ENCODE measurements at regions of chr7 and their contacts with region 1.

Region 1: DNA sequence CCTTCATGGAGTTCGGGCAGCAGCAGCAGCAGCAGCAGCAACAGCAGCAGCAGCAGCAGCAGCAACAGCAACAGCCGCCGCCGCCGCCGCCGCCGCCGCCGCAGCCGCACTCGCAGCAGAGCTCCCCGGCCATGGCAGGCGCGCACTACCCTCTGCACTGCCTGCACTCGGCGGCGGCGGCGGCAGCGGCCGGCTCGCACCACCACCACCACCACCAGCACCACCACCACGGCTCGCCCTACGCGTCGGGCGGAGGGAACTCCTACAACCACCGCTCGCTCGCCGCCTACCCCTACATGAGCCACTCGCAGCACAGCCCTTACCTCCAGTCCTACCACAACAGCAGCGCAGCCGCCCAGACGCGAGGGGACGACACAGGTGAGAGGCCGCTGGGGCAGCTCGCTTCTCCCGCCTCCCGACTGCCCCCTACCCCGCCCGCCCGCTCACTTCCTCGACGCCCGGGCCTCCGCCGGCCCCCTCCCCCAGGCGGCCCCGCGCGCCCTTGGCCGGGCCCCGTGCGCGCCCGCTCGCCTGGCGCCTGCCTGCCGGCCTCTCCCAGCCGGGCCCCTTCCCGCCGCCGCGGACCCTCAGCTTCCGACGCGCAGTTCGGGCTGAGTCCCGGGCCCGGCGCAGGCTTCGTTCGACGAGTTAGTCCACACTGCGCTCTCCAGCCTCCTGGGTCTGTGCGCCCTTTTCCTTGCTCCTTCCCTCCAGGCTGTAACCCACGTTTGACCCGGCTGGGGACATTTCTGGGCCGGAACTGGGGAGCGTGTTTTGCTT is 873 bp downstream of the DLX6 start:
- DNase-seq: peak in 1 of 2 experiments; percentile 85
- H3K4me3 ChIP-seq: peak overlapping the region; percentile 26 to 58 (median 50)
- H3K27ac ChIP-seq: no peak overlapping the region
- H3K4me1 ChIP-seq: peaks cover 9 to 27% (median 18%) of the 10 kb centered on the region in 4 experiments
- H3K27me3 ChIP-seq: peaks cover 73 to 95% (median 88%) of the 10 kb centered on the region in 4 experiments
- CTCF ChIP-seq: 0 out of 4 replicates have a peak, but pooled peaks of 1 of the 3 experiments have one; percentile 4
- EP300 ChIP-seq: 0 out of 3 replicates have a peak, but pooled peaks of 1 of the 2 experiments have one; percentile 38
- POLR2A ChIP-seq: no peak
- RAD21 ChIP-seq: no peak

Region 2: DNA sequence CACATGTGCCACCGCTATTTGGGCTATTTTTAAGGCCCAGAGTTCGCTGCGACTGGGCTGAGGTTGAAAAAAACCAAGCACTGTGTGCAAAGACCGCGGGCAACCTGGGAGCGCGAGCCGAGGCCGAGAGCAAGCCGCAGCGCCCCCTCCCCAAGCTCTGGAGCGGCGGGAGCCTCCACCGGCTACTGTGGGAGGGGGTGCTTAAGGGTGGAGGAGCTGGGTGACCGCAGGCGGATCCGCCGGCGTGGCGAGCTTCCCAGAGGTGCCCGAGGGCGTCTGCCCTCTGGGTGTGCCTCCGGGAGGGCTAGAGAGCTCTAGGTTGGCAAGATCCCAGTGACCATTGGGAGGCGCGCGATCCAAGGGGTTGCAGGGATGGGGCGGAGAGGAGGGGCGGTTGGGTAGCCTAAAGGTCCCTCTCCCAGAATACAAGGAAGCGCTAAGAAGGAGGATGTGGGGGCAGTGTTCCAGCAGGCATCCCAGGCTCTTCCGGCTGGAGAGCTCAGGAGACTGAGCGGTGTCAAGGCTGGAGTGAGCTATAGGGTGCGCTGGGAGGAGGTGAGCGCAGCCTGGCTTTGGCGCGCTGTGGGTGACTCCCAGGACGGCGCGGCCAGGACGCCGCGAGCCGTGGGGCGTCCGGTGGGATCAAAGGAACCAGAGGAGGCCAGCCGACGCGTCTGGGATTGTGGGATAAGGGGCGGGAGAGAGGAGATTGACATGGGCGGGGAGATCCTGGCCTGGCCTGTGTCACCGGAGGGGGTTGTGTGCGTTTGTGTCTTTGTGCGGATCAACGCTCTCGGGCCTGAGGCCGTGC is 10.4 kb after region 1 on chr7:
- CTCF ChIA-PET with region 1: interaction called, 150 read pairs
- POLR2A ChIA-PET with region 1: interaction called, 22 read pairs
- DNase-seq: peak in 1 of 2 experiments; percentile 84
- H3K4me3 ChIP-seq: peak overlapping the region; percentile 22 to 52 (median 33); a peak in 6 of 8 replicates
- H3K27ac ChIP-seq: no peak overlapping the region
- H3K4me1 ChIP-seq: peaks cover 0 to 20% (median 13%) of the 10 kb centered on the region in 4 experiments; a peak in 5 of 7 replicates
- H3K27me3 ChIP-seq: peaks cover 94 to 100% (median 99%) of the 10 kb centered on the region in 4 experiments
- CTCF ChIP-seq: peak; percentile 51 to 57 (median 52)
- EP300 ChIP-seq: no peak
- POLR2A ChIP-seq: no peak
- RAD21 ChIP-seq: peak; percentile 62 to 70

Region 3: GRCh38 chr7:97094284-97094930 is 88.2 kb after region 1 on chr7:
- CTCF ChIA-PET with region 1: no interaction called
- POLR2A ChIA-PET with region 1: no interaction called
- DNase-seq: no peak
- H3K4me3 ChIP-seq: no peak overlapping the region
- H3K27ac ChIP-seq: no peak overlapping the region
- H3K4me1 ChIP-seq: no peaks in the 10 kb centered on the region
- H3K27me3 ChIP-seq: no peaks in the 10 kb centered on the region
- CTCF ChIP-seq: no peak
- EP300 ChIP-seq: no peak
- POLR2A ChIP-seq: no peak
- RAD21 ChIP-seq: no peak

Region 4: DNA sequence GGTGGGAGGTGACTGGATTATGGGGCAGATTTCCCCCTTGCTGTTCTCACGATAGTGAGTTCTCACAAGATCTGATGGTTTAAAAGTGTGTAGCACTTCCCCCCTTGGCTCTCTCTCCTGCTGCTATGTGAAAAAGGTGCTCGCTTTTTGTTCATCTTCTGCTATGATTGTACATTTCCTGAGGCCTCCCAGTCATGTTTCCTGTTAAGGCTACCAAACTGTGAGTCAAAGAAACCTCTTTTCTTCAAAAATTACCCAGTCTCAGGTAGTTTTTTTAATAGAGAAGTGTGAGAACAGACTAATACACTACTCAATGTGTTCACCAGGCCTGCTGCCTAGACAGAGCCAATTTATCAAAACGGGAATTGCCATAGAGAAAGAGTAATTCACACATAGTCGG is 160.9 kb after region 1 on chr7:
- CTCF ChIA-PET with region 1: no interaction called
- POLR2A ChIA-PET with region 1: no interaction called
- DNase-seq: no peak
- H3K4me3 ChIP-seq: no peak overlapping the region
- H3K27ac ChIP-seq: 0 out of 2 replicates have a peak overlapping the region, but pooled peaks have one; percentile 35
- H3K4me1 ChIP-seq: peaks cover 0 to 3% (median 0%) of the 10 kb centered on the region in 4 experiments; a peak in 2 of 7 replicates
- H3K27me3 ChIP-seq: no peaks in the 10 kb centered on the region
- CTCF ChIP-seq: no peak
- EP300 ChIP-seq: no peak
- POLR2A ChIP-seq: no peak
- RAD21 ChIP-seq: no peak

Measured in H1 (cell line).